ENCODE measurements at regions of chr17 and their contacts with region 1.

Region 1: DNA sequence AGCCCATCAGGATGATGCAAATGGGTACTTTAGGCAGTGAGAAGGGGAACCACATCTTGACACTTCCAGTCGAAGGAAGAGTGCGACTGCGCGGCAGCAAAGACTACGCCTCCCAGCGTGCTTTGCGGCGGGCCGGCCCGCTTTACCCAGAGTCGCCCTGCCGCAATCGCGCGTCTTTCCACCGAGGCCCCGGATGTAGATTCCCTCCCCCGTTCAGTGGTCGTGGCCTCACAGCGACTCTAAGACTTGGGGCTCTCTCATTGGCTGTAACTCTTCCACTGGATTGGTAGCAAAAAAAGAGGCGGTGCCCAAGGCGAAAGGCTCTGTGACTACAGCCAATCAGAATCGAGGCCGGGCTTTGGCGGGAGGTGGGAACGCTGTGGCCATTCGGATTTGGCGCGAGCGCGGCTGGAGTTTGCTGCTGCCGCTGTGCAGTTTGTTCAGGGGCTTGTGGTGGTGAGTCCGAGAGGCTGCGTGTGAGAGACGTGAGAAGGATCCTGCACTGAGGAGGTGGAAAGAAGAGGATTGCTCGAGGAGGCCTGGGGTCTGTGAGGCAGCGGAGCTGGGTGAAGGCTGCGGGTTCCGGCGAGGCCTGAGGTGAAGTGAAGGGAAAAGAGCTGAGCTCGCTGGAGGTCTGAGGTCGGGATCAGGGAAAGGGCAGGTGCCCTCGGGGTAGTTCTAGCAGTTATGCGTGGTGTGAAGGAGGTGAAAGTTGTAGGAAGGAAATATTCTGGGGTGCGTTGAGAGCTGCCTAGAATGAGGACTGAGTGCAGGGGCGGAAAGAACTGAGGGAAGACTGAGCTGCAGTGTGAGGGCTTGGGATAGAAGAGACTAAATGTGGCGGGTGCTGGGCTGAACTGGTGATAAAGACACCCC is at the start of gene CDC6:
- DNase-seq: peak; percentile 100
- H3K4me3 Mint-ChIP-seq: peak within 1 kb of the TSS; percentile 83
- H3K27ac Mint-ChIP-seq: peak within 1 kb of the TSS; percentile 90
- H3K4me1 Mint-ChIP-seq: peaks cover 71% of the 10 kb centered on the region
- H3K27me3 Mint-ChIP-seq: no peaks in the 10 kb centered on the region
- CTCF ChIP-seq: no peak
- total RNA-seq, gene CDC6: 567 and 645 TPM in 2 replicates

Region 2: DNA sequence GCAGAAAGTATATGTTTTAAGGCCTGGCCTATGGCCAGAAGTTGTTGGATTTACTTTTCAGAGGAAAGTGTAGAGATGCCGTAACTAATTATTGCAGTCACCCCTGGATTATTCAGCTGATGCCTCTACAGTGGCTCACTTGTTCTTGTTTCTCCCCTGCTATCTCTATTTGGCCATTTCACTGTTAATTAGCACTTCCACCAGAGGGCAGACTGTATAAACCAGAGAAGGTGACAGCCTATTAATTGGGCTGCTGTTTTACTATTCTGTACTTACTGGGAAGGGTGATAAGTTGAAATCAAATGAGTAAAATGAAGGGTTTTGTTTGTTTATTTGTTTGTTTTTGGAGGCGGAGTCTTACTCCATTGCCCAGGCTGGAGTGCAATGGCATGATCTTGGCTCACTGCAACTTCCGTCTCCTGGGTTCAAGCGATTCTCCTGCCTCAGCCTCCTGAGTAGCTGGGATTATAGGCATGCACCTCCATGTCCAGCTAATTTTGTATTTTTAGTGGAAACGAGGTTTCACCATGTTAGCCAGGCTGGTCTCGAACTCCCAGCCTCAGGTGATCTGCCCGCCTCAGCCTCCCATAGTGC is 760.4 kb before region 1 on chr17:
- CTCF ChIA-PET with region 1: no interaction called
- intact Hi-C with region 1: no loop called
- DNase-seq: peak; percentile 72
- H3K4me3 Mint-ChIP-seq: no peak overlapping the region
- H3K27ac Mint-ChIP-seq: no peak overlapping the region
- H3K4me1 Mint-ChIP-seq: no peaks in the 10 kb centered on the region
- H3K27me3 Mint-ChIP-seq: no peaks in the 10 kb centered on the region
- CTCF ChIP-seq: peak; percentile 97

Region 3: DNA sequence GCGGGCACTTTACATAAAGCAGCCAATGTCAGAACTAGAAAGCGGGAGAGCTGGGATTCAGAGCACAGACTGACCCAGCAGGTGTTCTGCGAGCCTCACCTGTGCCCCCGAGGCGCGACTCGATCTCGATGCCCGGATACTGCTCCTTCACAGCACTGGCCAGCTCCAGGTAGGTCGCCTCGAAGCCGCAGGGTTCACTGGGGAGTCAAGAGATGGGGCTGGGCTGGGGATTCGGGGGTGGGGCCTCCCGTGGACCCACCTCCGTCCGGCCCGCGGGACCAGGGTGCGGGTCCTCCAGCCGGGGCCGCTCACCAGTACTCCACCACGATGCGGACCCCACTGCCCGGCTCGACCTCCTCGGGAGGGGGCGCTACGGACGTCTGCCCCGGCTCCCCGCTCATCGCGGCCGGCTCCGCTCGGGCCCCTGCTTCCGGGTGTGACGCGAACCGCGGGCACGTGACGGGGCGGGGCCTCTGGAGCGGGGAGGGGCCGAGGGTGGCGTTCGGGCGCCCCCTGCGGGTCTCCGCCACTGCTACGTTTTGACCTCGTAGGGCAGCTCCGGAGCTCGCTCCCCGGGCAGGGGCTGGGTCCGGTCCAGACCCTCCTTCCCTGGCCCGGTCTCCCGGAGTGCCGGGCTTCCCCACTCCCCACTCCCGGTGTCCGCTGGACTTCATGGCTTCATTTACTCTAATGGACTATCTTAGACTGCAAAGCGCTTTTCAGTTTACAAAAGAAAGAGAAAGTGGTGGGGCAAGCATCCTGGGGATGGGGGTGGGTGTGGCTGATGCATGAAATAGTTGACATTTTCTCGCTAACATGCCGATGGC is 557.4 kb before region 1 on chr17 and contains the start of gene MIEN1:
- CTCF ChIA-PET with region 1: interaction called, 13 read pairs
- intact Hi-C with region 1: loop called (anchors 10 kb)
- DNase-seq: no peak
- H3K4me3 Mint-ChIP-seq: peak within 1 kb of the TSS; percentile 79
- H3K27ac Mint-ChIP-seq: peak within 1 kb of the TSS; percentile 90
- H3K4me1 Mint-ChIP-seq: peaks cover 34% of the 10 kb centered on the region
- H3K27me3 Mint-ChIP-seq: no peaks in the 10 kb centered on the region
- CTCF ChIP-seq: no peak
- total RNA-seq, gene MIEN1: 2,121 and 2,217 TPM in 2 replicates

Region 4: GRCh38 chr17:40075201-40075941 is 212.4 kb before region 1 on chr17:
- CTCF ChIA-PET with region 1: interaction called, 12 read pairs
- intact Hi-C with region 1: no loop called
- DNase-seq: peak; percentile 98
- H3K4me3 Mint-ChIP-seq: peak overlapping the region; percentile 14
- H3K27ac Mint-ChIP-seq: peak overlapping the region; percentile 6
- H3K4me1 Mint-ChIP-seq: peaks cover 70% of the 10 kb centered on the region
- H3K27me3 Mint-ChIP-seq: no peaks in the 10 kb centered on the region
- CTCF ChIP-seq: no peak

Region 5: DNA sequence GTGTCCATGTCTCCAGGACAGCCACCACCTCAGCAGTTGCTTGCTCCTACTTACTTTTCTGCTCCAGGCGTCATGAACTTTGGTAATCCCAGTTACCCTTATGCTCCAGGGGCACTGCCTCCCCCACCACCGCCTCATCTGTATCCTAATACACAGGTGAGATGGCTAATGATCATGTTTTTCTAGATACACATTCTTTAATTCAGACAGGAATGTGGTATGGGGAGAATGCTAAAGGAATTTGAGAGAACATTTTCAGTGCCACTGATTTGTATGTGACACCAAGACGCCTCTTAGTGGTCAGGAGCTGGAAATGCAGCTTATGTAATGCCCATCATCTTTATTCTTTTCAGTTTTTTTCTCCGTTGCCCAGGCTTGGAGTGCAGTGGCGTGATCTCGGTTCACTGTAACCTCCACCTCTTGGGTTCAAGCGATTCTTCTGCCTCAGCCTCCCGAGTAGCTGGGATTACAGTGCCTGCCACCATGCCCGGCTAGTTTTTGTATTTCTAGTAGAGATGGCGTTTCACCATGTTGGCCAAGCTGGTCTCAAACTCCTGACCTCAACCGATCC is 119.4 kb before region 1 on chr17:
- CTCF ChIA-PET with region 1: interaction called, 28 read pairs
- intact Hi-C with region 1: no loop called
- DNase-seq: peak; percentile 88
- H3K4me3 Mint-ChIP-seq: no peak overlapping the region
- H3K27ac Mint-ChIP-seq: peak overlapping the region; percentile 4
- H3K4me1 Mint-ChIP-seq: peaks cover 17% of the 10 kb centered on the region
- H3K27me3 Mint-ChIP-seq: no peaks in the 10 kb centered on the region
- CTCF ChIP-seq: no peak

Region 6: DNA sequence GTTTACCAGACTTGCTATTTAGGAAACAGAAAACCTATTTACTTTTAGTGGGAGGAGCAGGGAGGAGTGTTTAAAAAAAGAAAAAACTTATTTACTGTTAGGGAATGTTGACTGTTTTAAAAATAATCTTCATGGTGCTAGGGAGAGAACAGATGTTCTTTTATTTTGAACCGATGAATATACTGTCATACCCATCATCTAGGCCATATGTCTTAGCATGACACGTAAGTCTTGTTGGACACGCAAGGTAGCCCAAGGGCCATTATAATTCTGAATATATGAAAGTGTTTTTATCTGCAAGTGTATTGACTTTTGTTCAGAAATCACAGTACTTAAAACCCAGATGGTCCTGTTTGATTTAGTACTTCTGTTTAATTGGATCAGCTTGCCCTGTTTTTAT is 57.1 kb before region 1 on chr17:
- CTCF ChIA-PET with region 1: interaction called, 11 read pairs
- intact Hi-C with region 1: no loop called
- DNase-seq: no peak
- H3K4me3 Mint-ChIP-seq: no peak overlapping the region
- H3K27ac Mint-ChIP-seq: no peak overlapping the region
- H3K4me1 Mint-ChIP-seq: no peaks in the 10 kb centered on the region
- H3K27me3 Mint-ChIP-seq: no peaks in the 10 kb centered on the region
- CTCF ChIP-seq: no peak

Region 7: DNA sequence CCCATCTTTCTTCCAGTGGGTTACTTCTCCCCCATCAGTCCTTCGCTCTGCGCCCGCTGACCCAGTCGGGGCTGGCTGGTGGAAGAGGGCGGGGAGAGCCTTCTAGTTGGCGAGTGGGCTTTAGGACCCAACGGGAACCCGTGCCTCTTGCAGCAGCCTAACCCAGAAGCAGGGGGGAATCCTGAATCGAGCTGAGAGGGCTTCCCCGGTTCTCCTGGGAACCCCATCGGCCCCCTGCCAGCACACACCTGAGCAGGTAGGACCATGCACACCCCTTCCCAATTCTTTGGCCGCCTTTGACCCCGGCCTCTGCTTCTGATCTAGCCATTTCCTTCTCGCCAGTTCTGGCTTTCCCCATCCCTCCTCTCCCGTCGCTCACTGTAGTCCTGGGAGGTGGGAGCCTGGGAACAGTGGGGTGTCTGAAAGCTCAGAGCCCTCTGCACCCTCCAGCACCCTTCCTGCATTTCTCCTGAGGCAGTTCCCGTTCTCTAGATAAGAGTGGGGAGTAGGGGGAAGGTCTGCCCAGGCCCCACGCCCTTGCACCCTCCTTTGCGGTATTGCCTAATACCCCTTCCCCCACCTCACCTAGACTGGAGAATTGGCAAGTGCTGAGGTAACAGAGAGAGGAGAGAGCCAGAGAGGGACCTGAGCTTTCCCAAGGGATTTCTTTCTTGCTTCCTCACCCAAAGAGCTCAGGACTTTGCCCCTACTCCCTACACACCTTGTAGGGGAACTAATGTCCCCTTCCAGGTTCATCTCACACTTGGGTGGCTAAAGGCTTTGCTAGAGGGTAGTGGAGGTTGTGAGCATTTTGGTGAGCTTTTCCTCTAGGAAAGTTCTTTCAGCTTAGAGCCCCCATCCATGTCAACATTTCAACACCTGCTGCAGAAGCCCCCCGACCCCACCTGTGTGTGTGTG is 21.6 kb after region 1 on chr17 and contains the start of gene RARA:
- CTCF ChIA-PET with region 1: interaction called, 56 read pairs
- intact Hi-C with region 1: no loop called
- DNase-seq: peak; percentile 90
- H3K4me3 Mint-ChIP-seq: no peak within 1 kb of the TSS
- H3K27ac Mint-ChIP-seq: no peak within 1 kb of the TSS
- H3K4me1 Mint-ChIP-seq: peaks cover 2% of the 10 kb centered on the region
- H3K27me3 Mint-ChIP-seq: no peaks in the 10 kb centered on the region
- CTCF ChIP-seq: no peak
- total RNA-seq, gene RARA: 150 and 170 TPM in 2 replicates

Region 8: DNA sequence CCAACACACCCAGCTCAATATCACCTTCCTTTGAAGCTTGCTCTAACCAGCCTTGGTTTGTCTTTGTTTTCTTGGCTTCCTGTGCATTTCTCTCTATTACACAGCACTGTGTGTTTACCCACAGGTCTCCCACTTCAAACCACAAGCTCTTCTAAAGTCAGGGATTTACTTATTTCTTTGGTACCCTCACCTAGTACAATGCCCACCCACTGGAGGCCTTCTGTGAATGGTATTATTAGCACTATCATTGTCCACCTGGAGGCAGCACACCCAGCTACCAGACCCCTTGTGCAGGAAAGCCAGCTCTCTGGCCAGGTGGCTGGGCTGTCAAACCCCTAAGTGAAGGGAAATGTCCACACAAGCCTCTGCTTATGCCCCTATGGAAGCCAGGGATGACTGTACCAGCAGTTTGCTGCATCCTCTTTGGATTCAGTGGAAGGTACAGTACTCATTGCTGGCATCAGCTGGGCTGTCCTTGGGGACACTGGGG is 139.3 kb after region 1 on chr17:
- CTCF ChIA-PET with region 1: no interaction called
- intact Hi-C with region 1: no loop called
- DNase-seq: peak; percentile 45
- H3K4me3 Mint-ChIP-seq: no peak overlapping the region
- H3K27ac Mint-ChIP-seq: no peak overlapping the region
- H3K4me1 Mint-ChIP-seq: no peaks in the 10 kb centered on the region
- H3K27me3 Mint-ChIP-seq: peaks cover 50% of the 10 kb centered on the region
- CTCF ChIP-seq: no peak

Region 9: DNA sequence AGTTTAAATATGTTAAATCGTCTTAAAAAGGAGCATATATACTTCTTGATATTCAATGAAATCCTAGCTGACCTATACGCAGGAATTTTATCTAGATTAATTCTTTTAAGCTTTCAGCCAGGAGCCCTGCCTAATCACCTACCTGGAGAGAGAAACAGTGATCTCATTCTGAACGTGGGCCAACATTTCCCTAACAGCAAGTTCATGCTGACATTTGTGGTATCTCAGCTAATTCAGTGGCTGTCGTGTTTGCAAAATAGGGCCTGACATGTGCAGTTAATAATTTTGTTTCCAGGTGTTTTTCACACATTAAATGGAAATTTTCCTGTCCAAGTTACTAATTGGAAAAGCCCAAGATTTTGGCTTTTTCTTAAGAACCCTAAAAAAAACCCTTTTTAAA is 398.5 kb after region 1 on chr17:
- CTCF ChIA-PET with region 1: interaction called, 15 read pairs
- intact Hi-C with region 1: no loop called
- DNase-seq: no peak
- H3K4me3 Mint-ChIP-seq: no peak overlapping the region
- H3K27ac Mint-ChIP-seq: no peak overlapping the region
- H3K4me1 Mint-ChIP-seq: no peaks in the 10 kb centered on the region
- H3K27me3 Mint-ChIP-seq: peaks cover 38% of the 10 kb centered on the region
- CTCF ChIP-seq: no peak